H1 (cell line): ENCODE measurements at regions of chr5 and their contacts with region 1.

Region 1: GRCh38 chr5:116574367-116575325 is at the start of gene SEMA6A:
- DNase-seq: peak; percentile 97 to 98
- H3K4me3 ChIP-seq: peak within 1 kb of the TSS; percentile 86 to 97 (median 90)
- H3K27ac ChIP-seq: peak within 1 kb of the TSS; percentile 76
- H3K4me1 ChIP-seq: peaks cover 2 to 12% (median 6%) of the 10 kb centered on the region in 4 experiments; a peak in 5 of 7 replicates
- H3K27me3 ChIP-seq: no peaks in the 10 kb centered on the region
- CTCF ChIP-seq: peak; percentile 10 to 37 (median 25); a peak in 2 of 4 replicates
- EP300 ChIP-seq: peak in 1 of 2 experiments; percentile 63; a peak in 1 of 3 replicates
- POLR2A ChIP-seq: peak; percentile 76 to 93; a peak in 2 of 3 replicates
- RAD21 ChIP-seq: peak; percentile 49 to 54
- total RNA-seq, gene SEMA6A: 260 and 277 TPM in 2 replicates

Region 2: DNA sequence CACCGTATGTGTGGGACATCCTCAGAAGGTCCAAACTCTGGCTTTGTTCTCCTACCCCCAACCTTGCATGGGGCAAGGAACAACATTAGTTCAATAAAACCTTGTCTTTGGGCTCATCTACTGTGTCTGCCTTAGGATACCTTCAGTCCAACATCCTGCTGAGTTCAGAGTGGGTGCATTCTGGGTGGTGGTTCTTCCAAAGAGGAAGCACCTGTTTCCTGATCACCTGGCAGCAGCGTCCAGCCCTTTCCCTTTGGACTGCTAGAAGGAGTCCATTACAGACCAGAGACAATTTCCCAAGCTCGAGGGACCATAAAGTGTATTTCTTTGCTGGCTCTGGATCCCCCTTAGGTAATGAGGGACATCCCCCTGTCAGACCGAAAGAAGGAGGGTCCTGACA is 154.1 kb before region 1 on chr5:
- CTCF ChIA-PET with region 1: no interaction called
- POLR2A ChIA-PET with region 1: no interaction called
- DNase-seq: no peak
- H3K4me3 ChIP-seq: no peak overlapping the region
- H3K27ac ChIP-seq: no peak overlapping the region
- H3K4me1 ChIP-seq: no peaks in the 10 kb centered on the region
- H3K27me3 ChIP-seq: no peaks in the 10 kb centered on the region
- CTCF ChIP-seq: no peak
- EP300 ChIP-seq: no peak
- POLR2A ChIP-seq: no peak
- RAD21 ChIP-seq: no peak

Region 3: GRCh38 chr5:116475338-116475737 is 99.3 kb before region 1 on chr5:
- CTCF ChIA-PET with region 1: no interaction called
- POLR2A ChIA-PET with region 1: no interaction called
- DNase-seq: no peak
- H3K4me3 ChIP-seq: no peak overlapping the region
- H3K27ac ChIP-seq: no peak overlapping the region
- H3K4me1 ChIP-seq: no peaks in the 10 kb centered on the region
- H3K27me3 ChIP-seq: no peaks in the 10 kb centered on the region
- CTCF ChIP-seq: no peak
- EP300 ChIP-seq: no peak
- POLR2A ChIP-seq: no peak
- RAD21 ChIP-seq: no peak

Region 4: GRCh38 chr5:116557669-116558271 is 16.9 kb before region 1 on chr5:
- CTCF ChIA-PET with region 1: interaction called, 13 read pairs
- POLR2A ChIA-PET with region 1: interaction called, 13 read pairs
- DNase-seq: no peak
- H3K4me3 ChIP-seq: no peak overlapping the region
- H3K27ac ChIP-seq: no peak overlapping the region
- H3K4me1 ChIP-seq: peaks cover 13 to 35% (median 27%) of the 10 kb centered on the region in 4 experiments
- H3K27me3 ChIP-seq: no peaks in the 10 kb centered on the region
- CTCF ChIP-seq: peak in 2 of 3 experiments; percentile 46 to 61; a peak in 3 of 4 replicates
- EP300 ChIP-seq: no peak
- POLR2A ChIP-seq: no peak
- RAD21 ChIP-seq: peak; percentile 59 to 60

Region 5: GRCh38 chr5:116564312-116564711 is 10.3 kb before region 1 on chr5:
- CTCF ChIA-PET with region 1: interaction called, 10 read pairs
- POLR2A ChIA-PET with region 1: interaction called, 13 read pairs
- DNase-seq: no peak
- H3K4me3 ChIP-seq: no peak overlapping the region; a peak in 1 of 8 replicates
- H3K27ac ChIP-seq: no peak overlapping the region
- H3K4me1 ChIP-seq: peaks cover 6 to 51% (median 33%) of the 10 kb centered on the region in 4 experiments
- H3K27me3 ChIP-seq: no peaks in the 10 kb centered on the region
- CTCF ChIP-seq: no peak
- EP300 ChIP-seq: no peak
- POLR2A ChIP-seq: no peak
- RAD21 ChIP-seq: no peak

Region 6: GRCh38 chr5:116844015-116844414 is 269.4 kb after region 1 on chr5:
- CTCF ChIA-PET with region 1: no interaction called
- POLR2A ChIA-PET with region 1: no interaction called
- DNase-seq: no peak
- H3K4me3 ChIP-seq: no peak overlapping the region
- H3K27ac ChIP-seq: no peak overlapping the region
- H3K4me1 ChIP-seq: no peaks in the 10 kb centered on the region
- H3K27me3 ChIP-seq: no peaks in the 10 kb centered on the region
- CTCF ChIP-seq: no peak
- EP300 ChIP-seq: no peak
- POLR2A ChIP-seq: no peak
- RAD21 ChIP-seq: no peak

Region 7: DNA sequence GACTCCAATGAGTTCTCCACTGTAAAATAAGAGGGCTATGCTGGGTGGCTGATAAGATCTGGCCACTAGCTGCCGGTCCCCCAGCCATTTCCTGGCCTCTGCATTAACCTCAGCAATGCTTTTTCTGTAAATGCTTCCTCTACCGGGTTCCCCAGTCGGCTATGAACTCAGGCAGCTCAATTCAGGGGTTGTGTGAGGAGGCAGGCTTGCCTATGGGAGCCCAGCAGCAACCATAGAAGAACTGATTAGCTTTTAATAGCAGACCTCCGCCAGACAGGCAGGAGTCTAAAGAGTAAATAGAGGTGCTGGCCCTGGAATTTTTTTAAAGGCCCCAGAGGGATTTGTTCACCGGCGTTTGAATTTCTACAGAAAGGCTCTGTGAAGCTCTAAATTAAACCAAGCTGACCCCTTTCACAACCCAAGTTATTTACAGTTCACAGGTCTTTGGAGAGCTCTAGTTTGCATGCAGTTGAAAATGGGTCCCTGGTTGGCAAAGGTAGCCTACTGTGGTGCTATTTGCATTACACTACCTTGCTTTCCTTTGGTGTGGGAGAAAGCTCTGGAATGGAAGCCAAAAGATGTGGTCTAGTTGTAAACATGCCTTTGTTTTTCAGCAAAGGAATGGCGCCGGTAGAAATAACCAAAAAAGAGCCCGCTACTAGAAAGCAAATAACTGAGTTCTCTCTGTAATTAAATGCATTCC is 289.6 kb after region 1 on chr5:
- CTCF ChIA-PET with region 1: interaction called, 6 read pairs
- POLR2A ChIA-PET with region 1: interaction called, 19 read pairs
- DNase-seq: peak; percentile 64 to 91
- H3K4me3 ChIP-seq: peak overlapping the region in 1 of 4 experiments; percentile 15; a peak in 2 of 8 replicates
- H3K27ac ChIP-seq: peak overlapping the region; percentile 78; the same call in 1 of the 2 replicates
- H3K4me1 ChIP-seq: peaks cover 8 to 30% (median 18%) of the 10 kb centered on the region in 4 experiments
- H3K27me3 ChIP-seq: no peaks in the 10 kb centered on the region
- CTCF ChIP-seq: no peak
- EP300 ChIP-seq: peak in 1 of 2 experiments; percentile 84; a peak in 1 of 3 replicates
- POLR2A ChIP-seq: peak in 1 of 2 experiments; percentile 35; a peak in 2 of 3 replicates
- RAD21 ChIP-seq: peak; percentile 1 to 29; a peak in 2 of 4 replicates

Region 8: GRCh38 chr5:116947691-116948528 is 373.3 kb after region 1 on chr5:
- CTCF ChIA-PET with region 1: interaction called, 13 read pairs
- POLR2A ChIA-PET with region 1: interaction called, 14 read pairs
- DNase-seq: peak; percentile 93 to 95
- H3K4me3 ChIP-seq: no peak overlapping the region
- H3K27ac ChIP-seq: no peak overlapping the region
- H3K4me1 ChIP-seq: peaks cover 0 to 4% (median 2%) of the 10 kb centered on the region in 4 experiments; a peak in 2 of 7 replicates
- H3K27me3 ChIP-seq: no peaks in the 10 kb centered on the region
- CTCF ChIP-seq: peak; percentile 79 to 96 (median 81)
- EP300 ChIP-seq: peak in 1 of 2 experiments; percentile 33; a peak in 1 of 3 replicates
- POLR2A ChIP-seq: no peak
- RAD21 ChIP-seq: peak; percentile 98